ENCODE measurements at regions of chr6 and their contacts with region 1.

Region 1: GRCh38 chr6:134443009-134443408 is 125.1 kb upstream of the SGK1 start:
- DNase-seq: no peak
- ATAC-seq: no peak
- H3K4me3 ChIP-seq: no peak overlapping the region
- H3K4me3 Mint-ChIP-seq: no peak overlapping the region
- H3K27ac ChIP-seq: no peak overlapping the region
- H3K27ac Mint-ChIP-seq: no peak overlapping the region
- H3K4me1 ChIP-seq: no peaks in the 10 kb centered on the region
- H3K4me1 Mint-ChIP-seq: no peaks in the 10 kb centered on the region
- H3K27me3 ChIP-seq: no peaks in the 10 kb centered on the region
- H3K27me3 Mint-ChIP-seq: no peaks in the 10 kb centered on the region
- CTCF ChIP-seq: no peak

Region 2: GRCh38 chr6:134074151-134075055 is 368.6 kb before region 1 on chr6:
- CTCF ChIA-PET with region 1: no interaction called
- POLR2A ChIA-PET with region 1: no interaction called
- intact Hi-C with region 1: no loop called
- DNase-seq: no peak
- ATAC-seq: no peak
- H3K4me3 ChIP-seq: no peak overlapping the region
- H3K4me3 Mint-ChIP-seq: no peak overlapping the region
- H3K27ac ChIP-seq: no peak overlapping the region
- H3K27ac Mint-ChIP-seq: no peak overlapping the region
- H3K4me1 ChIP-seq: peaks cover under 1% of the 10 kb centered on the region
- H3K4me1 Mint-ChIP-seq: no peaks in the 10 kb centered on the region
- H3K27me3 ChIP-seq: no peaks in the 10 kb centered on the region
- H3K27me3 Mint-ChIP-seq: no peaks in the 10 kb centered on the region
- CTCF ChIP-seq: no peak

Region 3: DNA sequence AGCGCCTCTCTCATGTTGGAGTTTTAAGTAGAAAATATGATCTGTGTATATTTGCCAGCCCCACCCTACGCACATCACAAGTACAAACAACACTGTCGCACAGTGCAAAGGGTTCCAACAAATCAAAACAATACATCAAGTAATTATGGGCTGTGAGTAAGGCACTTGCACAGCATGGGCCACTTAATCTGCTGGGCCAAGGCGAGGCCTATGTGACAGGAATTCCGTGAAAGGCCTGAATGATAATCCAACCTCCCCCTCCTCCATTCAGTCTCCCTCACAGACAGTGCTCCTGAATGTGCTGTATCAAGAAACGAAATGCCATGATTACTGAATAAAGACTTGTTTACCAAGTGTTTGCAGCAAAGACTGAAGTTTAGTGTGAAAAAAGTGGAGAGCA is 260.5 kb before region 1 on chr6:
- CTCF ChIA-PET with region 1: no interaction called
- POLR2A ChIA-PET with region 1: no interaction called
- intact Hi-C with region 1: loop called in 1 of 2 experiments (anchors 5 kb)
- DNase-seq: no peak
- ATAC-seq: no peak
- H3K4me3 ChIP-seq: no peak overlapping the region
- H3K4me3 Mint-ChIP-seq: no peak overlapping the region
- H3K27ac ChIP-seq: no peak overlapping the region
- H3K27ac Mint-ChIP-seq: no peak overlapping the region
- H3K4me1 ChIP-seq: peaks cover 12% of the 10 kb centered on the region
- H3K4me1 Mint-ChIP-seq: peaks cover 31% of the 10 kb centered on the region
- H3K27me3 ChIP-seq: no peaks in the 10 kb centered on the region
- H3K27me3 Mint-ChIP-seq: no peaks in the 10 kb centered on the region
- CTCF ChIP-seq: no peak

Region 4: GRCh38 chr6:134550604-134551003 is 107.6 kb after region 1 on chr6:
- CTCF ChIA-PET with region 1: no interaction called
- POLR2A ChIA-PET with region 1: no interaction called
- intact Hi-C with region 1: no loop called
- DNase-seq: no peak
- ATAC-seq: no peak
- H3K4me3 ChIP-seq: no peak overlapping the region
- H3K4me3 Mint-ChIP-seq: no peak overlapping the region
- H3K27ac ChIP-seq: no peak overlapping the region
- H3K27ac Mint-ChIP-seq: no peak overlapping the region
- H3K4me1 ChIP-seq: no peaks in the 10 kb centered on the region
- H3K4me1 Mint-ChIP-seq: no peaks in the 10 kb centered on the region
- H3K27me3 ChIP-seq: no peaks in the 10 kb centered on the region
- H3K27me3 Mint-ChIP-seq: no peaks in the 10 kb centered on the region
- CTCF ChIP-seq: no peak